Posterior vena cava (tissue), 2 donors: ENCODE measurements at regions of chr2 and their contacts with region 1.

Region 1: GRCh38 chr2:164554487-164554886 is 66.8 kb downstream of the GRB14 start:
- DNase-seq: no peak

Region 2: DNA sequence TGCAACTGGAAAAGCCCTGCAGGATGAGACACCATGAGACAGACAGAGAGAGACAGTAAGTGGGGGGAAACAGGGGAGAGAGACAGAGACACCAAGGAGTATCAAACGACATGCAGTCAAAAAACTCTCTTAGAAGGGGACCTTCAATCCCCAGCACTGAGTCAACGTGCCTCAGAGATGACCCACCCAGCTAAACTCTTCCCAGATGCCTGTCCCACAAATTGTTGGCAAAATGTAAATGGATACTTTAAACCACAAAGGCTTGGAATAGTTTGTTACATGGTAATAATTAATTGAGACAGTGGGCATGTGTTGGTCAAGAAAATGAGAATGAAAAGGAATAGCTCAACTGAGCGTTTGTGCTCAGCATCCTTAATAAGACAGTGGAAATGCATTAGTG is 31.5 kb before region 1 on chr2:
- intact Hi-C with region 1: no loop called
- DNase-seq: no peak

Region 3: DNA sequence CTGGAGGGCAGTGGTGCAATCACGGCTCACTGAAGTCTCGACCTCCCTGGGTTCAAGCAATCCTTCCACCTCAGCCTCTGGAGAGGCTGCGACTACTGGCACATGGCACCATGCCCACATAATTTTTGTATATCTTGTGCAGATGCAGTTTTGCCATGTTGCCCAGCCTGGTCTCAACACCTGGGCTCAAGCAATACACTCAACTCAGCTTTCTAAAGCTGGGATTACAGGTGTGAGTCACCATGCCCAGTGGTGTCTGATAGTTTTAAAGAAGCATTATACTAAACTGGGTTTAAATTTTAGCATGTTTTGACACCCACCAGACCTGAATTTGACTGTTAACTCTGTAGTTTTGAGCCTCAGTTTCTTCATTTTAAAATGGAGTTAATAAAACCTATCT is 510.3 kb after region 1 on chr2:
- intact Hi-C with region 1: loop called in 1 of 2 experiments (anchors 5 kb)
- DNase-seq: no peak